Left ventricle myocardium inferior (tissue), 1 donor: ENCODE measurements at regions of chr9 and their contacts with region 1.

Region 1: DNA sequence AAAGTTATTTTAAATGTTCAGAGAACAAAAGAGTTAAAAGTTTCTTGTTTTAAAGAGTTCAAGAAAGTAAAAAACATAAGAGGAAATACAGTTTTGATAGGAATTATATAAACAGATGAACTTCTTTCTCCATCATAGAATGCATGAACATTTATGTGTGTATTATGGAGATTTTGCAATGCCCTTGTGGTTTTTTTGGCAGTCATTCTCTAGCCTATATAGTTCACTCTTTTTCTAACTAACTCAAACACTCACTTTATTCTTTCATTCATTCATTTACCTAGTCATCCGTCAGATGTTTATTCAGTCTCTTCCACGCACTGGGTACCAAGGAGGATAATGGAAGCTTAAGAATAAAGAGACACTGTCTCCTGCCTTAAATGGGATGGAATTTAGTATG is 195.9 kb upstream of the VLDLR start:
- DNase-seq: no peak
- H3K4me3 ChIP-seq: no peak overlapping the region
- H3K27ac ChIP-seq: peak overlapping the region; percentile 65
- H3K4me1 ChIP-seq: peaks cover 10% of the 10 kb centered on the region
- H3K27me3 ChIP-seq: no peaks in the 10 kb centered on the region
- CTCF ChIP-seq: no peak

Region 2: GRCh38 chr9:2297771-2298170 is 127.9 kb before region 1 on chr9:
- intact Hi-C with region 1: loop called (anchors 1 kb)
- DNase-seq: no peak
- H3K4me3 ChIP-seq: no peak overlapping the region
- H3K27ac ChIP-seq: no peak overlapping the region
- H3K4me1 ChIP-seq: no peaks in the 10 kb centered on the region
- H3K27me3 ChIP-seq: no peaks in the 10 kb centered on the region
- CTCF ChIP-seq: no peak

Region 3: GRCh38 chr9:2465921-2466466 is 40.3 kb after region 1 on chr9:
- intact Hi-C with region 1: no loop called
- DNase-seq: no peak
- H3K4me3 ChIP-seq: no peak overlapping the region
- H3K27ac ChIP-seq: no peak overlapping the region
- H3K4me1 ChIP-seq: peaks cover 23% of the 10 kb centered on the region
- H3K27me3 ChIP-seq: no peaks in the 10 kb centered on the region
- CTCF ChIP-seq: no peak